ENCODE measurements at regions of chr17 and their contacts with region 1.

Region 1: DNA sequence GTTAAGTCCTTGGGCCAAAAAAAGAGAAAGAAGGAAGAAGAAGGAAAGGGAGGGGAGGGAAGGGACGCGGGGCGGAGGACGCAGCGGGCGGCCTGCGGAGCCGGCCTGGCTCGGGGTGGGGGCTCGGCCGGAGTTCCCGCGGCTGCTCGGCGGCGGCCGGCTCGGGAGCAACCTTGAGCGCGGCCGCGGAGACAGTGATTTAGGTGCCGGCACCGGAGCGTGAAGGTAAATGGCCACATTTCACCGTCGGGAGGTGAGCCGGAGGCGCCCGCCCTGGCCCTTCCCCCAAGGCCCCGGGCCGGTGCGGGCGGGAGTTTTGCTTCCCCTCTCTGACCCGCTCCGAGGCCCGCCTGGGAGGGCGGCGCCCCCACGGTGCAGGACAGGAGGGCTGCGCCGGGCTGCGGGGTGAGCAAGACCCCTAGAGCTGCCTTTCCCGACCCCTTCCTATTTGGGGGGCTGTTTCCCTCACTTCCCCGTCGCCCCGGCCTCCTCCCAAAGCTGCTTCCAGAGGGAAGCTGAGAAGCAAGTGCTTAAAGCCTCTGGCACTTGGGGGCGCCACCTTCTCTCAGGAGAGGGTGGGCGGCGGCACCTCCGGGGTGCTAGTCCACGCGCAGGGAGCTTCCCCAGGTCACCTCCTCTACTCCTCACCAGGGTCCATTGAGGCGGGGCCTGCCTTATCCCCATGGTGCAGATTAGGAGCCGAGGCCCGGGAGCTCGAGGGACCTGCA is 56.5 kb downstream of the MRM1 start:
- DNase-seq: peak; percentile 76
- ATAC-seq: peak; percentile 72
- H3K4me3 Mint-ChIP-seq: peak overlapping the region; percentile 84
- H3K27ac Mint-ChIP-seq: no peak overlapping the region
- H3K4me1 Mint-ChIP-seq: peaks cover 6% of the 10 kb centered on the region
- H3K27me3 Mint-ChIP-seq: peaks cover 16% of the 10 kb centered on the region
- CTCF ChIP-seq: no peak

Region 2: GRCh38 chr17:36629252-36629847 is 28.6 kb before region 1 on chr17:
- CTCF ChIA-PET with region 1: interaction called, 12 read pairs
- POLR2A ChIA-PET with region 1: no interaction called
- DNase-seq: peak; percentile 90
- ATAC-seq: peak; percentile 70
- H3K4me3 Mint-ChIP-seq: no peak overlapping the region
- H3K27ac Mint-ChIP-seq: no peak overlapping the region
- H3K4me1 Mint-ChIP-seq: peaks cover 35% of the 10 kb centered on the region
- H3K27me3 Mint-ChIP-seq: peaks cover 18% of the 10 kb centered on the region
- CTCF ChIP-seq: peak; percentile 100

Region 3: GRCh38 chr17:36641877-36642845 is 15.8 kb before region 1 on chr17:
- CTCF ChIA-PET with region 1: interaction called, 18 read pairs
- POLR2A ChIA-PET with region 1: interaction called, 3 read pairs
- DNase-seq: peak; percentile 46
- ATAC-seq: peak; percentile 55
- H3K4me3 Mint-ChIP-seq: peak overlapping the region; percentile 76
- H3K27ac Mint-ChIP-seq: no peak overlapping the region
- H3K4me1 Mint-ChIP-seq: peaks cover 23% of the 10 kb centered on the region
- H3K27me3 Mint-ChIP-seq: peaks cover 63% of the 10 kb centered on the region
- CTCF ChIP-seq: no peak

Region 4: DNA sequence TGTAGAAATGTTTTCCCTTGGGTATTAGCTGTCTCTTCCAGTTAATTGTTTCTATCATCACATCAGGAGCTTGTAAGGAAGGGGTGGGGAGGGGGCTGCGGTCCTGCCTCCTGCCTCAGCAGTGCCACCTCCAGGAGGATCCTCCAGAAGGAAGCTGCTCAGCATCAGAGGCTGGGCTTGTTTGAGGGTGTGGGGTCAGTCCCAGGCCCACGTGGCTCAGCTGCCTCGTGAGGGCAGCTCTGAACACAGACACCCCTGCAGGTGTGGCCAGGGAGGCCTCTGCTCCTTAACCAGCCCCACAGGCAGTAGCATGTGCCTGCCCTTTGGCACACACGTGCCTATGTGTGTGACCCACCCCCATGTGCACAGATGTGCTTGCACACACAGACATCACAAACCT is 10.3 kb before region 1 on chr17:
- CTCF ChIA-PET with region 1: interaction called, 18 read pairs
- POLR2A ChIA-PET with region 1: interaction called, 3 read pairs
- DNase-seq: peak; percentile 47
- ATAC-seq: peak; percentile 84
- H3K4me3 Mint-ChIP-seq: no peak overlapping the region
- H3K27ac Mint-ChIP-seq: no peak overlapping the region
- H3K4me1 Mint-ChIP-seq: peaks cover 26% of the 10 kb centered on the region
- H3K27me3 Mint-ChIP-seq: peaks cover 27% of the 10 kb centered on the region
- CTCF ChIP-seq: no peak

Region 5: GRCh38 chr17:36705874-36706731 is 48.2 kb after region 1 on chr17:
- CTCF ChIA-PET with region 1: interaction called, 17 read pairs
- POLR2A ChIA-PET with region 1: no interaction called
- DNase-seq: peak; percentile 70
- ATAC-seq: peak; percentile 80
- H3K4me3 Mint-ChIP-seq: no peak overlapping the region
- H3K27ac Mint-ChIP-seq: no peak overlapping the region
- H3K4me1 Mint-ChIP-seq: 0 out of 2 replicates have a peak, but pooled peaks cover 3% of the 10 kb centered on the region
- H3K27me3 Mint-ChIP-seq: peaks cover 44% of the 10 kb centered on the region
- CTCF ChIP-seq: peak; percentile 70

Region 6: GRCh38 chr17:36755586-36755985 is 97.7 kb after region 1 on chr17:
- CTCF ChIA-PET with region 1: interaction called, 14 read pairs
- POLR2A ChIA-PET with region 1: no interaction called
- DNase-seq: peak; percentile 77
- ATAC-seq: peak; percentile 88
- H3K4me3 Mint-ChIP-seq: no peak overlapping the region
- H3K27ac Mint-ChIP-seq: no peak overlapping the region
- H3K4me1 Mint-ChIP-seq: peaks cover 12% of the 10 kb centered on the region
- H3K27me3 Mint-ChIP-seq: no peaks in the 10 kb centered on the region; the same call in 1 of the 2 replicates
- CTCF ChIP-seq: peak; percentile 33